GM12878 (cell line): ENCODE measurements at regions of chr1 and their contacts with region 1.

Region 1: DNA sequence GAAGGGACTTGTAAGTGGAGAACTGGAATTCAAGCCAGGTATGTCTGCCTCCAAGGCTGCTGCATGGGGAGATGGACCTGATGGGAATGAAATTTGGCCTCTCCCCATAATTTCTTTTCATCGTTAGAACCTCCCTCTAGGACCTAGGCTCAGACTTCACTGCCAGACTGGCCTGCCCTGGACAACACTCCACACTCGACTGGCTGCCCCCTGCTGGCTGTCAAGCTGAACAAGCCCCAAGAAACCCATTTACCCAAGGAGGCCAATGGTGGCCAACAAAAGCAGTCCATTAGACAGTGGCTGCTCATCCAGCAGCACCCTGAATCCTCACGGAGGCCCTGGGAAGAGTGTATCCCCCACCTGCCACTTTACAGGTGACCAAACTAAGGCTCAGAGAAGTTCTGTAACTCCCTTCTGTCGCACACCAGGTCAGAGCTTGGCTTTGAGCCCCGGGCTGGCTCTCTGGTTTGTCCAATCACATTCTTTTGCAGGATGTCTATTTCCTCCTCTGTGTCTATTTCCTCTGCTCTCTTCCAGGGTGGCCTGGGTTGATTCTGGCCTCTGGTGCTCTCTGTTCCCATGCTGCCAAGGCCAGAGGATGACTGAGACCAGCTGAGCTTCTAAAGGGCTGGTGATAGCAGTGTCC is 3.8 kb downstream of the RNF186 start:
- DNase-seq: no peak
- ATAC-seq: peak; percentile 96
- H3K4me3 ChIP-seq: no peak overlapping the region
- H3K27ac ChIP-seq: no peak overlapping the region
- H3K4me1 ChIP-seq: no peaks in the 10 kb centered on the region
- H3K27me3 ChIP-seq: no peaks in the 10 kb centered on the region; a peak in 1 of 4 replicates
- CTCF ChIP-seq: peak; percentile 71 to 76 (median 74)
- EP300 ChIP-seq: no peak
- POLR2A ChIP-seq: no peak
- RAD21 ChIP-seq: peak; percentile 60

Region 2: GRCh38 chr1:19715334-19716203 is 95.8 kb before region 1 on chr1:
- CTCF ChIA-PET with region 1: interaction called, 11 read pairs
- POLR2A ChIA-PET with region 1: no interaction called
- RAD21 ChIA-PET with region 1: interaction called, 10 read pairs
- SMC1A ChIA-PET with region 1: interaction called, 3 read pairs
- in situ Hi-C with region 1: no loop called
- intact Hi-C with region 1: loop called (anchors 1 kb)
- DNase-seq: peak; percentile 66
- ATAC-seq: peak; percentile 89
- H3K4me3 ChIP-seq: no peak overlapping the region
- H3K27ac ChIP-seq: no peak overlapping the region
- H3K4me1 ChIP-seq: peaks cover 22% of the 10 kb centered on the region
- H3K27me3 ChIP-seq: no peaks in the 10 kb centered on the region
- CTCF ChIP-seq: peak; percentile 85 to 91 (median 87)
- EP300 ChIP-seq: no peak
- POLR2A ChIP-seq: no peak
- RAD21 ChIP-seq: peak; percentile 63

Region 3: DNA sequence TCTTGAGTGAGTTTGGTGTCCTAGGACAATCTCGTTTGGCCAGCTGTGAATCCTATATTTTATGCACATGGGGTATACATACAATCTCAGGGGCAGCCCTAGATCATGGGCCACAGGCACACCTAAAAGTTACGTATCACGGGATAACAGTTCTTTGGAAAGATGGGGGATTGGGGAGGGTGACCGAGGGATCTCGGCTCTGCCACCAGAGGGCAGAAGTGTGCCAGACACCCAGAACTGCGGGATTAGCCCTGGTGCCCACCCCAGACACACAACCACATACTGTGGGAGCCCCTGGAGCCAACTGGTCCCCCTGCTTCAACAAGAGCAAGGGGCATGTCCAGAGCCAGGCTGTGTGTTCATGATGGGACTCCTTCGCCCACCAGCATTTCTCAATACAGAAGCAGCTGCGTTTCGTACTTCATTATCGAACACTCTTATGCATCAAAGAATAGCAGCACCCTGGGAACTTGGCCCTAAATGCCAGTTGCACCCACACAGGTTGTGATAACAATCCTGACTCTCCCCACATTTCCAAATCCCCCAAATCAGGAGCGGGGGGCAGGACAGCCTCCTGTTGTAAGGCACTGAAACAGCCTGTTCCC is 49.1 kb before region 1 on chr1:
- CTCF ChIA-PET with region 1: interaction called, 14 read pairs
- POLR2A ChIA-PET with region 1: no interaction called
- RAD21 ChIA-PET with region 1: interaction called, 9 read pairs
- SMC1A ChIA-PET with region 1: interaction called, 5 read pairs
- in situ Hi-C with region 1: no loop called
- intact Hi-C with region 1: loop called (anchors 1 kb)
- DNase-seq: no peak
- ATAC-seq: peak; percentile 81
- H3K4me3 ChIP-seq: no peak overlapping the region
- H3K27ac ChIP-seq: no peak overlapping the region
- H3K4me1 ChIP-seq: peaks cover 3% of the 10 kb centered on the region
- H3K27me3 ChIP-seq: no peaks in the 10 kb centered on the region
- CTCF ChIP-seq: peak; percentile 63 to 84 (median 80)
- EP300 ChIP-seq: no peak
- POLR2A ChIP-seq: no peak
- RAD21 ChIP-seq: peak; percentile 55

Region 4: GRCh38 chr1:20058531-20058930 is 247.2 kb after region 1 on chr1:
- CTCF ChIA-PET with region 1: no interaction called
- POLR2A ChIA-PET with region 1: no interaction called
- RAD21 ChIA-PET with region 1: no interaction called
- SMC1A ChIA-PET with region 1: no interaction called
- in situ Hi-C with region 1: no loop called
- intact Hi-C with region 1: no loop called
- DNase-seq: no peak
- ATAC-seq: peak; percentile 83
- H3K4me3 ChIP-seq: no peak overlapping the region
- H3K27ac ChIP-seq: no peak overlapping the region
- H3K4me1 ChIP-seq: peaks cover 19% of the 10 kb centered on the region
- H3K27me3 ChIP-seq: no peaks in the 10 kb centered on the region
- CTCF ChIP-seq: no peak
- EP300 ChIP-seq: no peak
- POLR2A ChIP-seq: no peak
- RAD21 ChIP-seq: no peak